Colonic mucosa (tissue), 4 donors: ENCODE measurements at regions of chr2 and their contacts with region 1.

Region 1: GRCh38 chr2:64653349-64654062 is at the start of gene SERTAD2:
- DNase-seq: peak; percentile 88
- H3K4me3 ChIP-seq: peak within 1 kb of the TSS; percentile 89
- H3K27ac ChIP-seq: peak within 1 kb of the TSS; percentile 99
- H3K4me1 ChIP-seq: peaks cover 17% of the 10 kb centered on the region
- H3K27me3 ChIP-seq: no peaks in the 10 kb centered on the region
- CTCF ChIP-seq: no peak
- total RNA-seq, gene SERTAD2: 11.2 to 20.7 TPM

Region 2: DNA sequence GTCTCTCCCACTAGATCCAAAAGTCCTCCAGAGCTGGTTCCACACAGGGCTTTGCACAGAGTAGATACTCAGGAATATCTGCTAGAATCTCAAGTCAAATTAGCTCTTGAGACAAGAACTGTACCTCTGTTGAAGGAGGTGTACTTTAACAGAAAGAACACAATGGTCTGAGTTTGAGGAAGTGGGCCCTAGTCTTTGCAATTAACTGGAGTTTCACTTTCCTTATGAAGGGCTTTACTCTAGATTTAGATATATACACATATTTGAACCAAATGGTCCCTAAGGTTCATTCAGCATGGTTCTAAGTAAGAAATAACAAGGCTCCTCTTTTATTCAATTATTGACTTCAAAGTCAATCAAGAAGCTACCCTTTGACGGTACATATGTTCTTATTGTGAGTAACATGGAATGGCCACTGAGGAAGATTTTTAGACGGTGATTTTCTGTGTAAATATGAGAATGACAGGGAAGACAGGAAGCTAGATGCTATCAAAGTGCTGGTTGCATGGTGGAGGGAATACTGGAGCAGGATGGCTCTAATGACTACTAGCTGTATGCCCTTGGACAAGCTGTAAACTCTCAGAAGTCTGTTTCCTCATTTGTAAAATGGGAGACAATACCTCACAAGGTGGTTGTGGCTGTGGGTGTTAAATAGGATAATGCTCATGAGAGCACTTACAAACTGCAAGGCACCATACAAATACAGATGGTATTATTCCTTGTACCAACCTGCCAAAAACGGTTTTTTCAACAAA is 73.7 kb after region 1 on chr2:
- intact Hi-C with region 1: loop called (anchors 10 kb)
- DNase-seq: no peak
- H3K4me3 ChIP-seq: no peak overlapping the region
- H3K27ac ChIP-seq: peak overlapping the region; percentile 62
- H3K4me1 ChIP-seq: peaks cover 6% of the 10 kb centered on the region
- H3K27me3 ChIP-seq: no peaks in the 10 kb centered on the region
- CTCF ChIP-seq: no peak

Region 3: DNA sequence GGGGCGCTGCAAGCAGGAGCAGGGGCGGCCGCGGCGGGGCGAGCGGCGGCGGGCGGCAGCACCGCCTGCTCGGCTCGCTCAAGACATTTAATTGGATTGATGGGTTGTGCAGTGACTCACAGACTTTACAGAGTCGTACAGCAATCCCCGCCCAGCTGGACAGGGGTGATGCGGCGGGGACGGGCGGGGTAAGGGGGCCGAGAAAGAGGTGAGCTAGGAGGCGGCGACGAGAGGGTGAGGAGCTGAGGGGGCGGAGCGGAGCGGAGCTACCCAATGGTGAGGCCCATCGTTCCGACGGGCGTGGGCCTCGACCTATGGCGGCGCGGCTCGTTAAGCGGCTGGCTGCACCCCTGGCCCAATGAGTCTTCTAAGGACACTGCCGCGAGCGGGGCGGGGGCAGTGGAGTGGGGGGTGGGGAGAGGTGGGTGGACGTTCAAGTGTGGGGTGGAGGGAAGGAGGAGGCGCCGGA is 97.3 kb after region 1 on chr2:
- intact Hi-C with region 1: loop called (anchors 2 kb)
- DNase-seq: peak; percentile 98
- H3K4me3 ChIP-seq: peak overlapping the region; percentile 60
- H3K27ac ChIP-seq: peak overlapping the region; percentile 95
- H3K4me1 ChIP-seq: peaks cover 8% of the 10 kb centered on the region
- H3K27me3 ChIP-seq: no peaks in the 10 kb centered on the region
- CTCF ChIP-seq: no peak